Activated T-helper 1 cell treated with anti-CD3 and anti-CD28 coated beads, Interleukin-12 subunit alpha, Interleukin-12 subunit beta, Interleukin-2, Interleukin-4 antibody, amounts not matched to agents 30 ng/mL and 10 ng/mL and 1 ng/mL, durations not matched to agents 14 hours and 24 hours and 36 hours (primary cell): ENCODE measurements at regions of chrX and their contacts with region 1.

Region 1: GRCh38 chrX:45515262-45516215 is 314.9 kb upstream of the DIPK2B start:
- DNase-seq: peak; percentile 1
- H3K4me3 Mint-ChIP-seq: no peak overlapping the region
- H3K27ac Mint-ChIP-seq: peak overlapping the region; percentile 65
- H3K4me1 Mint-ChIP-seq: peaks cover 25% of the 10 kb centered on the region
- H3K27me3 Mint-ChIP-seq: no peaks in the 10 kb centered on the region

Region 2: DNA sequence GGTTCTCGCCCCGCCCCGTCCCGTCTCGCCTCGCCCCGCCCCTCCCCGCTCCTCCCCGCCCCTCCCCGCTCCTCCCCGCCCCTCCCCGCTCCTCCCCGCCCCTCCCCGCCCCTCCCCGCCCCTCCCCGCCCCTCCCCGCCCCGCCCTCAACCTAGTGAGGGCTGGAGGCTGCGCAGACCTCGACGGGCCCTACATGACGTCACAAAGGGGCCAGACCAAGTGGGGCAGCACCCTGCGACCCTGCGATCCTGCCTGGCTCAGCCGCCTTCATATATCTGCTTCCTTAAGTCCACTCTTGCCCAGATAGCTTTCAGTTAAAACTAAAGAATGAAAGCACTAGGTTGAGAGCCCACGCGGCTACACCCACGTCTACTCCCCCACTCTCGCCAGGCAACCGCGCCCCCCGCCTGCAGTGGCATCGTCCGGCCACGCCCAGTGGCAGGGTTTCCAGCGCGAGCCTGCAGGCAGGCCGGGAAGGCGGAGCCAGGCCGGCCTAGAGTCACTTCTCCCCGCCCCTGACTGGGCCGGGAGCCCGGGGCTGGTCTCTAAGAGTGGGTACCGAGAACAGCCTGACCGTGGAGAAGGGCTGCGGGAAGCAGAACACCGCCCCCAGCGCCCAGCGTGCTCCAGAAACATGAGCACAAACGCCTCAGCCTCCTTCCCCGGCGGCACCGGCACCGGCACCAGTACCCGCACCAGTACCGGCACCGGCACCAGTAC is 1860.9 kb before region 1 on chrX:
- intact Hi-C with region 1: no loop called
- DNase-seq: peak; percentile 79
- H3K4me3 Mint-ChIP-seq: peak overlapping the region; percentile 85
- H3K27ac Mint-ChIP-seq: peak overlapping the region; percentile 96
- H3K4me1 Mint-ChIP-seq: peaks cover 5% of the 10 kb centered on the region
- H3K27me3 Mint-ChIP-seq: no peaks in the 10 kb centered on the region

Region 3: DNA sequence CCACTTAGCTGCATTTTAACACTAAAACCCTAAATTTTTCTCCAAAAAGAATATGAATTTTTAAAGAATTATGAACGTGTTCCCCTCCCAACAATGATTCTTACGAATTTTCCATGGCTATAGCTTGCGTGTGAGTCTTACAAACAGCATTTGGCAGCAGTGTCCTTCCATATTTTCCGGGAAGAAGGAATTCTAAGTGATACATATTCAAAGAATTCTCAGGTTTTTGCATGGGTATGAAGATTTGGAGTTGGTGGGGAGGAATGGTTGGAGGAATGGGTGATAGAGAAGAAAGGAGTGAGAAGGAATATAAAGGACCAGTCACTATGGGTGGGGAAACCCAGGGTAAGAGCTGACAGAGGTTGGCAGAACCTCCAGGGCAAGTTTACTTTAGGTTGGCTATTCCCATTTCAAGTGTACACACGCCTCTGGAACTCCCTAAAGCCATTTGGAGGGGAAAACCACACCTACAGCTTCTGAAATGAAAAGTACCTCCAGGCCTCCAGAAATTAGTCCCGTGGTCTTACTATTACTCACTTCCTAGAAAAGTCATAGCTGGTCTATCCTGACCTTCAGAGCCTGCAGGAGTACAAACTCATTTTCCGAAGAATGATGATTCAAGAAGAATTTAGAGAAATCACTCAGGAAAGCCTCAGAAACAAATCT is 106.0 kb after region 1 on chrX:
- intact Hi-C with region 1: loop called (anchors 2 kb)
- DNase-seq: no peak
- H3K4me3 Mint-ChIP-seq: no peak overlapping the region
- H3K27ac Mint-ChIP-seq: peak overlapping the region; percentile 91
- H3K4me1 Mint-ChIP-seq: peaks cover 19% of the 10 kb centered on the region
- H3K27me3 Mint-ChIP-seq: no peaks in the 10 kb centered on the region

Region 4: DNA sequence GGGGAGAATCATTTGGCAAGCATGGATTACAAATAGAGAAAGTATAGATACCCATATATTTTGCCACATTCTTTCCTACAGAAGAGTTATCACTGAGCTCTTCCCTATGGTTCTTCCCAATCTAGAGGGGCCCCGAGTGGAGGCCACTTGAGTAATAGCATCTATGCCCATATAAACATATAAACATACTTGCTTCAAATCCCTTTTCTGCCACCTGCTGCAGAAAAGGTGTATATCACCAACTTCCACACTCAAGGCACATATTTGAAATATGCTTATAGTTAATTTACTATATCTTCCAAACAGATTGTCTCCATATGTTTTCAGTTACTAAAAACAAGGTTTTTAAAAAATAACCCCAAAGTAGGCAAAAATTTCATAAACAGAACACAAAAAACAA is 328.0 kb after region 1 on chrX:
- intact Hi-C with region 1: loop called (anchors 1 kb)
- DNase-seq: no peak
- H3K4me3 Mint-ChIP-seq: peak overlapping the region; percentile 75
- H3K27ac Mint-ChIP-seq: peak overlapping the region; percentile 56
- H3K4me1 Mint-ChIP-seq: peaks cover 47% of the 10 kb centered on the region
- H3K27me3 Mint-ChIP-seq: no peaks in the 10 kb centered on the region

Region 5: DNA sequence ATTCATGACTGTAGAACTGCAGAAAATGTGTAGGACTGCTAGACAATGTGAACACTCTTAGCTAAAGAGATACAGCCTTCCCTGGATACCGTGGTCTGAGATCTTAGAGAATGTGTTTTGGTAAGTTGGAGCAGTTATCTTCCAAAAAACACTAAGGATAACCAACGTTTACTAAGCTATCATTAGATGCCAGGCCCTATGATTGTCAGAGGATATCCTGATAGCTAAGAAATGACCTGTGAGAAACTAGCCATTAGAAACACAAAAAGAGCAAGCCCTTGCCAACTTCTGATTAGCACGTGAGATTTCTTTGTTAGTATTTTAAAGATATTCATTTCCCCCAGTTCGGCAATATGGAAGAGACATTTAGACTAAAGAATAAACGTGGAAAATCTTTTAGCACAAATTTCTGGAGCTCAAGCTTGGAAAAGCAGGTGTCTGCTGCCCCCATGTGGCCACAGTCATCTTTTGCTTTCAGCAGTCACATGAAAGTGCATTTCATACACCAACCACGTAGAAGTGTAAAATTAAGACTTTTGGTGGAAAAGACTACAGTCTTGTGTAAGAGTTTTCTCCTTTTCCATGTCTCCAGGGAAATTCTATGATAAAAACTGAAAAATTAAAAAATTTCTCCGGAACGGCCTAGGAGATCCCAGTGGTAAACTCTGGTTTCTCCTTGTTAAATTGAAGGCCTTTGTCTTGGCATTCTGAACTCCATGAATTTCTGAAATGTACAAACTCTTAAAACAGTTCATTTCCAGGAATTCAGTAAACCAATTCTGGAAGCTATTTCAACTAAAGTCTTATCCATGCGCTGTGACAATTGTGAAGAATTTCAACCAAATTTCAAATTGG is 893.2 kb after region 1 on chrX:
- intact Hi-C with region 1: loop called (anchors 1 kb)
- DNase-seq: peak; percentile 2
- H3K4me3 Mint-ChIP-seq: no peak overlapping the region
- H3K27ac Mint-ChIP-seq: no peak overlapping the region
- H3K4me1 Mint-ChIP-seq: no peaks in the 10 kb centered on the region
- H3K27me3 Mint-ChIP-seq: peaks cover 3% of the 10 kb centered on the region